ENCODE measurements at regions of chr20 and their contacts with region 1.

Region 1: DNA sequence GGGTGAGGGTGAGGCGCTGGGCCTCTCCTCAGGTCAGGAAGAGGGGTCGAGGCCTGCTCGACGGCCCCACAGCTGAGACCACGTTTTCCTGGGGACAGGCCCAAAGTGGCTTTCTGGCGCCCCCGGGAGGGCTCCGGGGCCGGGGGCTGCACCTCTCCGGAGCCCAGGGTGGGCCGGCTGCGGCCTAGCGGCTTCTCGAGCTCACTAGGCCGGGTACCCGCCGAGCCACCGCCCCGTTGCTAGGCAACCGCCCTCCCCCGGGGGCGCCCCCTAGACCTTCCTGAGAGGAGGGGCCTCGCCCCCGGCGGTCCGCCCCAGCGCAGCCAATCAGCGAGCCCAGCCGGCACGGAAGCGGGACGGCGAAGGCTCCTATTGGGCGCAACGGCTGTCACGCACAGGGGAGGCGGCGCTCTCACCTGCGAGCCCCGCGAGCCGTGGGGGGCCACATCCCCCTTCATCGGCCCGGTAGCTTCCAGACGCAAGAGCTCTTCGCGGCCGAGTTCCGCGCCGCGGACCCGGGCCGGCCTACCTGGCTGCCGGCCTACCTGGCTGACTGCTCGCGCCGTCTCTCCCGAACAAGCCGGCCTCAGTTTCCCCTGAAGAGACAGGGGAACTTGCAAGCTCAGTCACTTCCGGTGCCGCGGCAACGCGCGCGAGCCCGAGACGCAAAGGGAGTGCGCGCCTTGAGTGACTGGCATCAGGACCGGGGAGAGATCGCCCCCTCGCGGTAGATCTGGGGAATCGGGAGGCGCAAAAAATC is 831 bp upstream of the BCL2L1 start:
- DNase-seq: peak; percentile 98
- H3K4me3 ChIP-seq: peak overlapping the region; percentile 61 to 94 (median 91)
- H3K27ac ChIP-seq: peak overlapping the region; percentile 90
- H3K4me1 ChIP-seq: peaks cover 23% of the 10 kb centered on the region
- H3K27me3 ChIP-seq: no peaks in the 10 kb centered on the region
- CTCF ChIP-seq: peak; percentile 84 to 93
- POLR2A ChIP-seq: no peak

Region 2: GRCh38 chr20:31572701-31573554 is 150.6 kb before region 1 on chr20:
- CTCF ChIA-PET with region 1: interaction called, 35 read pairs
- POLR2A ChIA-PET with region 1: interaction called, 3 read pairs
- dilution Hi-C with region 1: no loop called
- intact Hi-C with region 1: no loop called
- DNase-seq: peak; percentile 99
- H3K4me3 ChIP-seq: peak overlapping the region; percentile 22 to 52 (median 31)
- H3K27ac ChIP-seq: peak overlapping the region; percentile 94
- H3K4me1 ChIP-seq: peaks cover 36% of the 10 kb centered on the region
- H3K27me3 ChIP-seq: no peaks in the 10 kb centered on the region
- CTCF ChIP-seq: no peak
- POLR2A ChIP-seq: peak; percentile 92

Region 3: GRCh38 chr20:31637660-31638059 is 85.8 kb before region 1 on chr20 and contains the start of gene COX4I2:
- CTCF ChIA-PET with region 1: interaction called, 426 read pairs
- POLR2A ChIA-PET with region 1: interaction called, 4 read pairs
- dilution Hi-C with region 1: no loop called
- intact Hi-C with region 1: loop called (anchors 1 kb)
- DNase-seq: no peak
- H3K4me3 ChIP-seq: no peak within 1 kb of the TSS
- H3K27ac ChIP-seq: no peak within 1 kb of the TSS
- H3K4me1 ChIP-seq: no peaks in the 10 kb centered on the region
- H3K27me3 ChIP-seq: peaks cover 5 to 10% of the 10 kb centered on the region in 2 experiments
- CTCF ChIP-seq: no peak
- POLR2A ChIP-seq: no peak
- total RNA-seq, gene COX4I2: not detected in 2 replicates

Region 4: DNA sequence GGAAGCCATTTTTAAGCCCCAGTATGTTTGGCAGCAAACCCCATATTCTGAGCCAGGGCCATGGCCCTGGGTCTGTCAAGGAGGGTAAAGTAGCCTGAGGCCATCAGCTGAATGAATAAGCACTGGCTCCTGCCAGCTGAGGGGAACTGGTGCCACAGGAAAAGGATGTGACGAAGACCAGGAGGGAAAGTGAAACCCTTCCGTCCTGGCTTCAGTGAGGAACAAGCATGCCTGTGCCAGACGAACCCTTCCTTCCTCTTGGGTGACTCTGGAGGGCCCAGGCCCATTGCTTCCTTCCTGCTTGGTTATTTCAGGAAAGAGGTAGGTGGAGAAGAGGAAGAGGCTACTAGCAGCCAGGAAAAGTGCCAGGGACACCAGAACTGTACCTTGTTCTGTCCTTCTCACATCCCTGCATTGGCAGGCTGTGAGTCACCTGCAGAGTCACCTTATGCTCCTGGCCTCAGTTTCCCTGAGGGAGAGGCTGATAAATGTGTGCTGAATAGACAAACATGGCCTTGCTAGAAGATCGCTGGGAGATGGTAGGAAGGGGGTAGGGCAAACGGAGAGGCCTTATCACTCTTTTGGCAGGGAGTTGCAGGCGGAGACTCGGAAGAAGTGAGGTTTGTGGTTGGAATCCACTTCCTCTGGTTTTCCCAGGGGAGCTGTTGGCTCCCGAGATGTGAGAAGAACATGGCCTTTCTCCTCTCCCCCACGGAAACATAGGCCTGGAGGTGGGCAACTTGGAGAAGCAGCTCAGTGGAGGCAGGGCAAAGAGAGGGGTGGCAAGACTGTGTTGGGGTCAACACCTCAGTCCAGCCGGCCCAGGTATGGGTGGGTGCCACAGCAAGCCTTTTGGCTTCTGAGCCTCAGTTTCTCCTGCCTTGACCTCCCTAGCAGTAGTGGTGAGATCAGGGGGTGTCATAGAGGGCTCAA is 48.3 kb before region 1 on chr20:
- CTCF ChIA-PET with region 1: interaction called, 97 read pairs
- POLR2A ChIA-PET with region 1: interaction called, 5 read pairs
- dilution Hi-C with region 1: no loop called
- intact Hi-C with region 1: loop called (anchors 1 kb)
- DNase-seq: peak; percentile 84
- H3K4me3 ChIP-seq: peak overlapping the region in 1 of 3 experiments; percentile 20
- H3K27ac ChIP-seq: peak overlapping the region; percentile 93
- H3K4me1 ChIP-seq: peaks cover 60% of the 10 kb centered on the region
- H3K27me3 ChIP-seq: no peaks in the 10 kb centered on the region
- CTCF ChIP-seq: no peak
- POLR2A ChIP-seq: peak; percentile 27

Region 5: DNA sequence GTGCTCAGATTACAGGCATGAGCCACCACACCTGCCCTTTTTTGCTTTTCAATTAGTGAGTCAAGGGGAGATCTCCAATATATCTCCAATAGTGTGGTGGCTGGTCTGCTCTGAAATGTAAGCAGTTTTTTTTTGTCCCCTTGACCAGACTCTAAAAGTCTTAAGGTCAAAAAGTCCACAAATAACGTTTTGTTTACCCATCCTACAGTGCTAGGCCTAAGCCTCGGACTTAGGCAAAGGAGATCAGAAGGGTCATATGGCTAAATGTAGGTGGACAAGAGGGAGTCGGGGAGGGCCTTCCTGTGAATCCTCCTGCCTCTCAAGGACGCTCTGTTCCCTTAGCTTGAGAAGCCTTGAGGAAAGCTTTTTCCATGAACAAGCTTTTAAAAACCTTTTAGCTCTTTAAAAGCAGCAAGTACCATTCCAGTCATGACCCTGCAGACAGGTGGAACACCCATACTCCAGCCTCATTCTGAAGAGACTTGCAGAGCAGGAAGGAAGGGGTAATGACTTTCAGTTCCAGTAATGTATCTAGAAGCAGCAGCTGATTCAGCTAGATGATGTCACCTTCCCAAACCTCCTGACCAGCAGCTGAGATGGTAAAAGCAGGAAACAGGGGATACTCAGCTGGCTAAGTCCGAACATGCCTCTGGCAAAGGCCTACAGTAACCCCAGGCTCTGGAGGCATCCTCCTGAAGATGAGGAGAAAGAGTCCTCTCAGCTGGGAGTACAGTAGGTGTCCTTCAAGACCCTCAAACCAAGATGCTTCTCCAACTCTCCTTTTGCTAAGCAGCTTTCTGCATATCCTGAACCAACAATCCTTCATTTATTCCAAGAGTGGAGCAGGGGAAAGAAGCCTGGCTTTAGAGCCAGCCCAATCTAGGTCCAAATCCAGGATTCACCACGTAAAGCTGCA is 24.4 kb before region 1 on chr20:
- CTCF ChIA-PET with region 1: interaction called, 47 read pairs
- POLR2A ChIA-PET with region 1: interaction called, 11 read pairs
- dilution Hi-C with region 1: no loop called
- intact Hi-C with region 1: loop called (anchors 1 kb)
- DNase-seq: peak; percentile 96
- H3K4me3 ChIP-seq: no peak overlapping the region
- H3K27ac ChIP-seq: peak overlapping the region; percentile 86
- H3K4me1 ChIP-seq: peaks cover 52% of the 10 kb centered on the region
- H3K27me3 ChIP-seq: no peaks in the 10 kb centered on the region
- CTCF ChIP-seq: no peak
- POLR2A ChIP-seq: peak; percentile 42

Region 6: DNA sequence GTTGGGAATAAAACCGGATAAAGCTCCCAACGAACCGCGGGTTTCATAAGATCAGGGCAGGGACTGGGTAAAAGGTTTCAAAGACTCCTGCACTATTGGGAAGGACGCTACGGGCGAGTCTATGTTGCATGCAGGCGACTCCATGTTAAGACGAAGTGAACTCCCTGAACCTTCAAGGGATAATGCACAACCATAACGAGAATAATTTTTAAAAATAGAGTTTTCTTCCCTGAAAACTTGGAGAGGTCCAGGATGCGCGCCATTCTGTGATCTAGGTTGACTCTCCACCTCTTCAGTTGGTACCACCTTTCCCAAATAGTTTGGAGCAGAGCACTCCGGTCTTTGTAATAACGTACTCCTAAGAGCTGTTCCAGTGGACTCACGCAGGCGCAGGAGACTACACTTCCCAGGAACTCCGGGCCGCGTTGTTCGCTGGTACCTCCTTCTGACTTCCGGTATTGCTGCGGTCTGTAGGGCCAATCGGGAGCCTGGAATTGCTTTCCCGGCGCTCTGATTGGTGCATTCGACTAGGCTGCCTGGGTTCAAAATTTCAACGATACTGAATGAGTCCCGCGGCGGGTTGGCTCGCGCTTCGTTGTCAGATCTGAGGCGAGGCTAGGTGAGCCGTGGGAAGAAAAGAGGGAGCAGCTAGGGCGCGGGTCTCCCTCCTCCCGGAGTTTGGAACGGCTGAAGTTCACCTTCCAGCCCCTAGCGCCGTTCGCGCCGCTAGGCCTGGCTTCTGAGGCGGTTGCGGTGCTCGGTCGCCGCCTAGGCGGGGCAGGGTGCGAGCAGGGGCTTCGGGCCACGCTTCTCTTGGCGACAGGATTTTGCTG is 15.4 kb after region 1 on chr20 and contains the start of gene TPX2:
- CTCF ChIA-PET with region 1: interaction called, 31 read pairs
- POLR2A ChIA-PET with region 1: no interaction called
- dilution Hi-C with region 1: no loop called
- intact Hi-C with region 1: no loop called
- DNase-seq: peak; percentile 98
- H3K4me3 ChIP-seq: peak within 1 kb of the TSS; percentile 78 to 99 (median 97)
- H3K27ac ChIP-seq: peak within 1 kb of the TSS; percentile 79
- H3K4me1 ChIP-seq: peaks cover 21% of the 10 kb centered on the region
- H3K27me3 ChIP-seq: no peaks in the 10 kb centered on the region
- CTCF ChIP-seq: no peak
- POLR2A ChIP-seq: peak; percentile 96
- total RNA-seq, gene TPX2: 112 and 114 TPM in 2 replicates

Region 7: GRCh38 chr20:33162753-33163152 is 1439.3 kb after region 1 on chr20:
- CTCF ChIA-PET with region 1: no interaction called
- POLR2A ChIA-PET with region 1: no interaction called
- dilution Hi-C with region 1: no loop called
- intact Hi-C with region 1: no loop called
- DNase-seq: no peak
- H3K4me3 ChIP-seq: no peak overlapping the region
- H3K27ac ChIP-seq: no peak overlapping the region
- H3K4me1 ChIP-seq: no peaks in the 10 kb centered on the region
- H3K27me3 ChIP-seq: no peaks in the 10 kb centered on the region
- CTCF ChIP-seq: no peak
- POLR2A ChIP-seq: no peak

Measured in endothelial cell of umbilical vein (primary cell).